Activated naive CD4-positive, alpha-beta T cell treated with anti-CD3 and anti-CD28 coated beads for 36 hours (primary cell): ENCODE measurements at regions of chr17 and their contacts with region 1.

Region 1: DNA sequence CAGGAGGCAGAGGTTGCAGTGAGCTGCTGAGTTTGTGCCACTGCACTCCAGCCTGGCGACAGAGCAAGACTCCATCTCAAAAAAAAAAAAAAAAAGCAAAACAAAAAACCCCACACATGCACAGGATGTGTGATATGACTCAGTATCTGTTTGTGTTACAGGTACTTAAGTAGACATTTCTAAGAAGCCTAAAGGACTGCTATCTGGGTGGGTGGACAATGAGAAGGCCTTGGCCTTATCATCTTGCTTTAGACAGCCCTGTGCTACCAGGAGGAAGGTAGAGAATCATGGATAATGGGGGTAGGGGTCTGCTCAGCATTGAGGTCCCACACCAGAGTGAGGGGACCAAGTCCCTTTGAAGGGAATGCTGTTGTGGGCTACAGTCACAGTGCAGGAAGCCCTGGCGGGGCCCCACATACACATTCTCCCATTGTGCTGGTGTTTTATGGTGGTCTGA is 26.7 kb downstream of the PLD6 start:
- DNase-seq: peak; percentile 35
- H3K4me3 Mint-ChIP-seq: peak overlapping the region; percentile 22
- H3K27ac Mint-ChIP-seq: peak overlapping the region; percentile 88
- H3K4me1 Mint-ChIP-seq: peaks cover 91% of the 10 kb centered on the region
- H3K27me3 Mint-ChIP-seq: no peaks in the 10 kb centered on the region

Region 2: DNA sequence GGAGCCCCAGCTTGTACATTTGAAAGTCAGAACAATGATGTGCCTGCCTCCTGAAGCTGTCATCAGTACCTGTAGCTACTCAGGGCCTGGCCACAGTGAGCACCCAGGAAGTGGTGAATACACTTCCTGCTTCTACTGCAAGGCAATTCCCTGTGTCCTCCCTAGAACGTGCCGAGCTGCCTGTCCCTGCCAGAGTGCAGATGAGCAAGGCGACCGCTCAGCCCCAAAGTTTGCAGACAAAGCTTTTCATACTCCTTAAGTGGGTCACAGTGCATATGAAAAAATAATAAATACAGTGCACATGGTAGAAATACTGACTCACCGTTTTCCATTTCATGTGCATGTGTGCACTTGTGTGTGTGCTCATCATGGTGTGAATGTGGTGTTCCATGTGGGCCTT is 59.9 kb before region 1 on chr17:
- CTCF ChIA-PET with region 1: no interaction called
- intact Hi-C with region 1: loop called (anchors 2 kb)
- DNase-seq: peak; percentile 79
- H3K4me3 Mint-ChIP-seq: no peak overlapping the region
- H3K27ac Mint-ChIP-seq: peak overlapping the region; percentile 82
- H3K4me1 Mint-ChIP-seq: peaks cover 75% of the 10 kb centered on the region
- H3K27me3 Mint-ChIP-seq: no peaks in the 10 kb centered on the region

Region 3: GRCh38 chr17:17206124-17206912 is 26.9 kb after region 1 on chr17 and contains the start of gene PLD6:
- CTCF ChIA-PET with region 1: interaction called, 4 read pairs
- intact Hi-C with region 1: loop called (anchors 1 kb)
- DNase-seq: peak; percentile 88
- H3K4me3 Mint-ChIP-seq: peak within 1 kb of the TSS; percentile 94
- H3K27ac Mint-ChIP-seq: peak within 1 kb of the TSS; percentile 90
- H3K4me1 Mint-ChIP-seq: peaks cover 27% of the 10 kb centered on the region
- H3K27me3 Mint-ChIP-seq: no peaks in the 10 kb centered on the region
- total RNA-seq, gene PLD6: 5.3 to 5.4 TPM

Region 4: GRCh38 chr17:17280613-17281549 is 101.5 kb after region 1 on chr17 and contains the start of gene COPS3:
- CTCF ChIA-PET with region 1: interaction called, 3 read pairs
- intact Hi-C with region 1: loop called (anchors 1 kb)
- DNase-seq: peak; percentile 99
- H3K4me3 Mint-ChIP-seq: peak within 1 kb of the TSS; percentile 94
- H3K27ac Mint-ChIP-seq: peak within 1 kb of the TSS; percentile 88
- H3K4me1 Mint-ChIP-seq: peaks cover 39% of the 10 kb centered on the region
- H3K27me3 Mint-ChIP-seq: no peaks in the 10 kb centered on the region
- total RNA-seq, gene COPS3: 103 to 104 TPM

Region 5: DNA sequence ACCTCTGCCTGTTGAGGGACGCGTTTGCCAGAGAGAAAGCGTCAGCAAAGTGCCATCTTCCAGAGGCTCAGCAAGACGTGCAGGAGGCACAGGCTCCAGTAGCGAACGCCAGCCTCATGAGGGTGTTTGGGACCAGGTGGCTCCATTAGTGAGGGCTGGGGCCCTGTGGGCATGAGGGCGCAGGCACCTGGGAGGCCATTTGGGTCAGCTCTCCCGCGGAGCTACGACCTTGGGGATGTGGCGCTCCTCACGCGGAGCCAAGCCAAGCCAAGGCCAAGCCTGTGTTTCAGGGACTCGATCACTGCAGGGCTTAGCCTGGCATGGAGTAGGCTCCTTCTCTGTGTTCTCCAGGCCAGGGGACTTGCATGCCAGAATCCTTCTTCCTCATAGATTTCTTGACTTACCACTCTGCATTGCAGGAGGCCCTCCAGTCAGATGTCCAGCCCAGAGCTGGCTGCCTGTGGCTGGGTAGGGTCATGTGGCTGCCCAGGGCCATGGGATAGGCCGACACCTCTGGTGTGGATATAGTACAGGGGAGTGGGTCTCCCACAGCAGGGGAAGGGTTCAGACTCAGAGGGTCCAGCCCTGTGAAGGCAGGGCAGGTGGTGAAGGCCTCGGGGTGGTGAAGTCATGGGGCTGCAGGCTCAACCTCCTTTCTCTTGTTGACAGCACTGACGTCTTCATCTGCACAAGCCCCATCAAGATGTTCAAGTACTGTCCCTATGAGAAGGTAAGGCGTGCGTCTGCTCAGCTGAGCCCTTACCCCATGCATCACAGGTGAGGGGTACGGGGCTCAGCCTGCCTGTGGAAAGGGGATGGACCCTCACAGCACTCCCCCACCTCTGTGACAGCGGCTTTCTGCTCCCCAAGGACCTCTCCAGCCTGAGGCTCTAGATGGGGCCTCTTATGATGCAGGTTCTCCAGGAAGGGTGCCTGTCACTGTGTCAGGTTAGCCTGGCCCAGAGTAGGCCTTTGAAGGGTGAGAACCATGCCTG is 143.4 kb after region 1 on chr17:
- CTCF ChIA-PET with region 1: no interaction called
- intact Hi-C with region 1: no loop called
- DNase-seq: no peak
- H3K4me3 Mint-ChIP-seq: no peak overlapping the region
- H3K27ac Mint-ChIP-seq: no peak overlapping the region
- H3K4me1 Mint-ChIP-seq: no peaks in the 10 kb centered on the region
- H3K27me3 Mint-ChIP-seq: no peaks in the 10 kb centered on the region

Region 6: GRCh38 chr17:17420561-17421269 is 241.3 kb after region 1 on chr17:
- CTCF ChIA-PET with region 1: no interaction called
- intact Hi-C with region 1: no loop called
- DNase-seq: no peak
- H3K4me3 Mint-ChIP-seq: no peak overlapping the region
- H3K27ac Mint-ChIP-seq: no peak overlapping the region
- H3K4me1 Mint-ChIP-seq: peaks cover 14% of the 10 kb centered on the region
- H3K27me3 Mint-ChIP-seq: no peaks in the 10 kb centered on the region

Region 7: GRCh38 chr17:17859909-17860765 is 680.7 kb after region 1 on chr17:
- CTCF ChIA-PET with region 1: no interaction called
- intact Hi-C with region 1: loop called (anchors 10 kb)
- DNase-seq: peak; percentile 80
- H3K4me3 Mint-ChIP-seq: no peak overlapping the region
- H3K27ac Mint-ChIP-seq: no peak overlapping the region
- H3K4me1 Mint-ChIP-seq: peaks cover 26% of the 10 kb centered on the region
- H3K27me3 Mint-ChIP-seq: no peaks in the 10 kb centered on the region